HepG2 (cell line): ENCODE measurements at regions of chr11 and their contacts with region 1.

Region 1: DNA sequence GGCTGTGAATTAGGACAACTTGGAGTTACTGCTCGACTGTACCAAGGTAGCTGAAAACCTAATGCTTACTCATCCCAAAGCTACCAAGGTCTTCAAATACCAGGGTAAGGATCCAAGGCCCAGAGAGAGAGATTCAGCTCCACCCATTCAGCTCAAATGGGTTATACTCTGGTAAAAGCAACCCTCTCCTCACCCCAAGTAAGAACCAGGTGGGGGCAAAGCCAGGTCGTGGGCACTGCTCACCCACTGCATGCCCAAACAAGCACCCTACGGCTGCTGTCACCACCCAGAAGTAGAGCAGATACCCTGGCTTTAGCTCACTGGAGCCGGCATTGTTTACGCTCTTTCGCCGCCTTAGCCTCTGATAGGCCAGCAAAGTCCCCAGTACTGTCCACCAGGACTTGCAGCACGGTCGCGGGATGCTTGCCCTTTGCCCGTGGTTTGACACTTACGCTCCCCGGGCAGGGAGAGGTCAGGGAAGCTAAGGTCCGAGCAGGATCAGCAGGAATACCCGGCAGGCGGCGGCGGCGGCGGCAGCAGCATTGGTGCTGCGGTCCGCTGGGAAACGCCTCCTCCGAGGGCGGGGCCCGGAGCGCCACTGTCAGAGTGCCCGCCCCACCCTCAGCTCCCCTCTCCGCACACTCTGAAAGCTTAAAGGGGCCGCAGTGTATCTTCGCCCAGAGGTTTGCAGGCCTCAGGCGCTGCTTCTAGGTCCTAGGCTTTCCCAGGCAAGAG is 19.6 kb downstream of the CKAP5 start:
- DNase-seq: peak; percentile 90
- ATAC-seq: peak; percentile 99
- H3K4me3 ChIP-seq: peak overlapping the region; percentile 40 to 72 (median 47)
- H3K27ac ChIP-seq: peak overlapping the region; percentile 58
- H3K4me1 ChIP-seq: peaks cover 64% of the 10 kb centered on the region
- H3K27me3 ChIP-seq: no peaks in the 10 kb centered on the region
- CTCF ChIP-seq: peak; percentile 56
- EP300 ChIP-seq: no peak
- POLR2A ChIP-seq: no peak
- RAD21 ChIP-seq: peak; percentile 39; the same call in 1 of the 2 replicates

Region 2: GRCh38 chr11:46616998-46617675 is 209.3 kb before region 1 on chr11 and contains the starts of genes ATG13 and HARBI1:
- CTCF ChIA-PET with region 1: no interaction called
- POLR2A ChIA-PET with region 1: no interaction called
- in situ Hi-C with region 1: no loop called
- intact Hi-C with region 1: no loop called
- DNase-seq: peak; percentile 77
- ATAC-seq: peak; percentile 97
- H3K4me3 ChIP-seq: peak within 1 kb of the TSS; percentile 99 to 100 (median 100)
- H3K27ac ChIP-seq: peak within 1 kb of the TSS; percentile 98
- H3K4me1 ChIP-seq: peaks cover 53% of the 10 kb centered on the region
- H3K27me3 ChIP-seq: no peaks in the 10 kb centered on the region; a peak in 1 of 5 replicates
- CTCF ChIP-seq: no peak
- EP300 ChIP-seq: peak in 1 of 2 experiments; percentile 45; a peak in 1 of 4 replicates
- POLR2A ChIP-seq: peak; percentile 60 to 87
- RAD21 ChIP-seq: 0 out of 2 replicates have a peak, but pooled peaks have one; percentile 12
- total RNA-seq, gene ATG13: 55.0 and 61.8 TPM in 2 replicates
- total RNA-seq, gene HARBI1: 4.8 and 6.9 TPM in 2 replicates

Region 3: DNA sequence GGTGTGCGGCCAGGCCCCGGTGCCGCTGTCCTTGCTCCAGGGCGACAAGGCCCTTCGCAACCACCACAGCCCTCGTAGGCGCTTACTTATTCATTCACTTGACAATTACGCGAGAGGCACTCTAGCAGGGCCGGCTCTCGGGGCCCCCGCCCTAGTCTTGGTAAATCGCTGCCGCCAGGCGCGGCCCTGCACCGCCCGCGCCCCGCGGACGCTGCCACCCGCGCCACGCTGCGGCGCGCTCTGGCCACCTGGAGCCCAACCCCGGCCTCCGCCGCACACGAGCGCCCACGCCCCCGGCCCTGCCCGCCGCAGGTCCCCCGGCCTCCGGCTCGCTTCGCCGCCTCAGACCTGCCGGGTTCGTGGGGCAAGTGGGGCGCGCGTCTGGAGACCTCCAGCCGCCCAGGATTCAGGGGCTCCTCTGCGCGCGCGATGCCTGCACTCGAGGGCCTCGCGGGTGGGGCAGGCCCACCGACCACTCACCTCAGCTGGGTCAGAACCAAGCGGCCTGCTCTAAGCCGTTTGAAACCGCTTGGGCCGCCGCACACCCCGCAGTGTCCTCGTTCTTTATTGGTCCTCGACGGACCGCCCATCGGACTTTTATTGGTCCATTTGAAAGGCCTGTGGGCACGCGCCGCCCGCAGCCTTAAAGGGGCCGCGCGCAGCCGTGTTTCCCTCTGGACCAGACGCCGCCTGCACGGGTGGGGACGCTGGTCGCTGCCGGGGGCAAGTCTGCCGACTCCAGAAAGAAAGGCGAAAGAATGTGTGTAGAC is 19.4 kb after region 1 on chr11 and contains the start of gene CKAP5:
- CTCF ChIA-PET with region 1: no interaction called
- POLR2A ChIA-PET with region 1: interaction called, 16 read pairs
- in situ Hi-C with region 1: no loop called
- intact Hi-C with region 1: loop called (anchors 1 kb)
- DNase-seq: peak; percentile 87
- ATAC-seq: peak; percentile 97
- H3K4me3 ChIP-seq: peak within 1 kb of the TSS; percentile 89 to 95 (median 94)
- H3K27ac ChIP-seq: peak within 1 kb of the TSS; percentile 87
- H3K4me1 ChIP-seq: peaks cover 30% of the 10 kb centered on the region
- H3K27me3 ChIP-seq: no peaks in the 10 kb centered on the region
- CTCF ChIP-seq: no peak
- EP300 ChIP-seq: 0 out of 4 replicates have a peak, but pooled peaks of 1 of the 2 experiments have one; percentile 16
- POLR2A ChIP-seq: peak; percentile 80 to 84
- RAD21 ChIP-seq: no peak; the same call in 1 of the 2 replicates
- total RNA-seq, gene CKAP5: 103 and 220 TPM in 2 replicates